ENCODE measurements at regions of chr9 and their contacts with region 1.

Region 1: GRCh38 chr9:69785757-69786156 is 25.9 kb upstream of the PTAR1 start:
- DNase-seq: no peak
- H3K4me3 ChIP-seq: no peak overlapping the region
- CTCF ChIP-seq: no peak
- POLR2A ChIP-seq: no peak

Region 2: GRCh38 chr9:69731348-69731747 is 54.4 kb before region 1 on chr9:
- intact Hi-C with region 1: no loop called
- DNase-seq: no peak
- H3K4me3 ChIP-seq: no peak overlapping the region
- CTCF ChIP-seq: no peak
- POLR2A ChIP-seq: no peak

Region 3: GRCh38 chr9:69820955-69821788 is 35.4 kb after region 1 on chr9:
- intact Hi-C with region 1: loop called (anchors 2 kb)
- DNase-seq: no peak
- H3K4me3 ChIP-seq: no peak overlapping the region
- CTCF ChIP-seq: no peak
- POLR2A ChIP-seq: no peak

Region 4: GRCh38 chr9:70043689-70044489 is 258.1 kb after region 1 on chr9 and contains the start of gene MAMDC2:
- intact Hi-C with region 1: no loop called
- DNase-seq: peak; percentile 56 to 93
- H3K4me3 ChIP-seq: peak within 1 kb of the TSS; percentile 47
- CTCF ChIP-seq: no peak
- POLR2A ChIP-seq: peak in 1 of 2 donors; percentile 27
- total RNA-seq, gene MAMDC2: 5.7 to 14.1 (median 9.9) TPM